ENCODE measurements at regions of chr22 and their contacts with region 1.

Region 1: DNA sequence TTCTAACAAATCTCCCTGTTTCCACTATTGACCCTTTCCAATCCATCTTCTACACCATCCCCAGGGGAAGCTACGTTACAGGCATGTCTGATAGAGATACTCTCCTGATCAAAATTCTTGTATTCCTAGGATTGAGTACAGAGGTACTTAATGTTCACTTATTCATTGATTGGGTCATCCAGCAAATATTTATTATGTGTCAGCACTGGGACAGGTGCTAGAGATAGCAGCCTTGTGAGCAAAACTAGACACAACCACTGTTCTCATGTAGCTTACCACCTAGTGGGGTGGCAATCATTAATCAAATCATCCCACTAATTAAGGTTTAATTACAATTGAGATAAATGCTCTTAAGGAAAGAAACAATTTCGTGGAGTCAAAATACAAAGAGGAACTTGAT is 9.4 kb upstream of the RTCB start:
- DNase-seq: no peak
- H3K4me3 ChIP-seq: no peak overlapping the region
- H3K27ac ChIP-seq: no peak overlapping the region
- H3K27me3 ChIP-seq: peaks cover 0 to 5% (median 0%) of the 10 kb centered on the region in 45 donors
- CTCF ChIP-seq: no peak

Region 2: DNA sequence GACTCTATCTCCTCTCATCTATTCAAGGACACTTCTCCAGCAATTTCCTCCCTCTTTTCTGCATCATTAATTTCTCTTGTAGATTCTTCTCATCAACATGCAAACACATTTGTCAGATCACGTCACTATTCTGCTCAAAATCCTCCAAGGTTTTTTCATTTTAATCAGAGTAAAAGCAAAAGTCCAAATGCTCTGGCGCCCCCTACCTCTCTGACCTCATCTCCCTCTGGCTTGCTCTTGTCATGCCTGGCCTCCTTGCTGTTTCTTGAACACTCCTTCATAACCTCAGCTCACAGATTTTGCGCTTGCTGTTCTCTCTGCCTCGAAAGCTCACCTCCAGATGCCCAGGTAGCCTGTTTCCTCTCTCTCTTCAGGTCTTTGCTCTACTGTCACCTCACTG is 31.8 kb before region 1 on chr22:
- intact Hi-C with region 1: no loop called
- DNase-seq: peak in 2 of 10 donors; percentile 38
- H3K4me3 ChIP-seq: no peak overlapping the region
- H3K27ac ChIP-seq: peak overlapping the region in 6 of 59 donors; percentile 5 to 57 (median 25)
- H3K27me3 ChIP-seq: no peaks in the 10 kb centered on the region
- CTCF ChIP-seq: peak in 48 of 56 donors; percentile 9 to 64 (median 40)

Region 3: GRCh38 chr22:32462452-32462851 is 41.0 kb after region 1 on chr22:
- intact Hi-C with region 1: loop called in 1 of 2 experiments (anchors 5 kb)
- DNase-seq: no peak
- H3K4me3 ChIP-seq: no peak overlapping the region
- H3K27ac ChIP-seq: no peak overlapping the region
- H3K27me3 ChIP-seq: peaks cover 0 to 4% (median 0%) of the 10 kb centered on the region in 45 donors
- CTCF ChIP-seq: no peak

Region 4: GRCh38 chr22:32528984-32529982 is 107.8 kb after region 1 on chr22:
- intact Hi-C with region 1: no loop called
- DNase-seq: peak; percentile 70 to 93 (median 88)
- H3K4me3 ChIP-seq: peak overlapping the region in 57 of 59 donors; percentile 4 to 65 (median 40)
- H3K27ac ChIP-seq: peak overlapping the region; percentile 42 to 98 (median 90)
- H3K27me3 ChIP-seq: no peaks in the 10 kb centered on the region
- CTCF ChIP-seq: peak; percentile 86 to 98 (median 95)